ENCODE measurements at regions of chr12 and their contacts with region 1.

Region 1: GRCh38 chr12:4118017-4118510 is 155.5 kb upstream of the CCND2 start:
- DNase-seq: no peak
- H3K4me3 Mint-ChIP-seq: peak overlapping the region; percentile 58
- H3K27ac Mint-ChIP-seq: peak overlapping the region; percentile 96
- H3K4me1 Mint-ChIP-seq: peaks cover 61% of the 10 kb centered on the region
- H3K27me3 Mint-ChIP-seq: no peaks in the 10 kb centered on the region

Region 2: GRCh38 chr12:4107436-4107878 is 10.6 kb before region 1 on chr12:
- CTCF ChIA-PET with region 1: interaction called, 33 read pairs
- intact Hi-C with region 1: no loop called
- DNase-seq: peak; percentile 87
- H3K4me3 Mint-ChIP-seq: peak overlapping the region; percentile 48
- H3K27ac Mint-ChIP-seq: peak overlapping the region; percentile 89
- H3K4me1 Mint-ChIP-seq: peaks cover 37% of the 10 kb centered on the region
- H3K27me3 Mint-ChIP-seq: peaks cover 3% of the 10 kb centered on the region

Region 3: GRCh38 chr12:4169959-4170358 is 51.9 kb after region 1 on chr12:
- CTCF ChIA-PET with region 1: interaction called, 4 read pairs
- intact Hi-C with region 1: loop called (anchors 2 kb)
- DNase-seq: peak; percentile 79
- H3K4me3 Mint-ChIP-seq: no peak overlapping the region
- H3K27ac Mint-ChIP-seq: peak overlapping the region; percentile 82
- H3K4me1 Mint-ChIP-seq: peaks cover 39% of the 10 kb centered on the region
- H3K27me3 Mint-ChIP-seq: no peaks in the 10 kb centered on the region

Region 4: GRCh38 chr12:4215229-4216186 is 97.4 kb after region 1 on chr12:
- CTCF ChIA-PET with region 1: interaction called, 3 read pairs
- intact Hi-C with region 1: loop called (anchors 1 kb)
- DNase-seq: peak; percentile 79
- H3K4me3 Mint-ChIP-seq: peak overlapping the region; percentile 60
- H3K27ac Mint-ChIP-seq: peak overlapping the region; percentile 91
- H3K4me1 Mint-ChIP-seq: peaks cover 33% of the 10 kb centered on the region
- H3K27me3 Mint-ChIP-seq: no peaks in the 10 kb centered on the region

Measured in activated naive CD4-positive, alpha-beta T cell treated with anti-CD3 and anti-CD28 coated beads for 36 hours (primary cell).